CD14-positive monocyte (primary cell): ENCODE measurements at regions of chr15 and their contacts with region 1.

Region 1: GRCh38 chr15:68672781-68673205 is 94.0 kb downstream of the CORO2B start:
- DNase-seq: no peak
- H3K4me3 ChIP-seq: no peak overlapping the region
- H3K4me3 Mint-ChIP-seq: no peak overlapping the region
- H3K27ac ChIP-seq: no peak overlapping the region
- H3K27ac Mint-ChIP-seq: no peak overlapping the region
- H3K4me1 ChIP-seq: peaks cover 20 to 26% of the 10 kb centered on the region in 2 donors
- H3K4me1 Mint-ChIP-seq: peaks cover 29% of the 10 kb centered on the region
- H3K27me3 ChIP-seq: no peaks in the 10 kb centered on the region
- H3K27me3 Mint-ChIP-seq: peaks cover 2 to 5% (median 2%) of the 10 kb centered on the region in 3 donors
- CTCF ChIP-seq: no peak

Region 2: DNA sequence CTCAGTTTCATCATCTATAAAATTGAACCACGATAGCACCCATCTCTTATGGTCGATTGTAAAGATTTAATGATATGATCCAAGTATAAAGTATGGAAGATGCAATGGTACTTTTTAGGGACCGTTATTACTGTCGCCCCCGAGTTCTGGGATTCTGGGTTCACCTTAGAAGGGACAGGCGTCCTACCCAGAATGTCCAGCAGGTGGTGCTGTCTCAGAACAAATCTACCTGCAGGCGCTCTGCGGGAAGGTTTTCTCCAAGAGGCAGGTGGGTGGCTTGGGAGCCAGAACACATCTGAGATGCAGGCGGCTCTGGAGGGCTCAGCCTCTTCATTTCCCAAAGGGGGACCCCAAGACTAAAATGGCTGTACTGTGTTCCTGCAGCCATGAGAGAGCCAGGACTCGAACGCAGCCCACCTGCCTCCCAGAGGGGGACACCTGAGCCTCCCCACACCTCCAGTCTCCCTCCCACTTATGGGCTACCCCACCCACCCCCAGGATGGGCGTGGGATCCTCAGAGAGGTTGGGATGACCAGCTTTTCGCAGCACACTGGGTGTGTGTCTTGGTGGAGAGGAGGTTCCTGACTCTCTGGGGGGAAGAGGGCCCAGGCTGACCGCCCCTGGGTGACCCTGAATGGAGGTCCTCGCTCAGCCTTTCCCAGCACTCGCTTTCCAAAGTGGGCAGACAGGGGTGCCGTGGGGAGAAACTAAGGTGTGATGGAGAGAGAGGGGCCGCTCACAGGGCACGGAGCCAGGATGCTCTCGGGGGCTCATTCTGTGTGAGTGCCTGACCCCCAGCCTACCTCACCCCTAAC is 122.1 kb before region 1 on chr15:
- intact Hi-C with region 1: loop called in 1 of 2 experiments (anchors 5 kb)
- DNase-seq: peak; percentile 32 to 55 (median 53)
- H3K4me3 ChIP-seq: no peak overlapping the region
- H3K4me3 Mint-ChIP-seq: no peak overlapping the region
- H3K27ac ChIP-seq: no peak overlapping the region
- H3K27ac Mint-ChIP-seq: no peak overlapping the region
- H3K4me1 ChIP-seq: no peaks in the 10 kb centered on the region
- H3K4me1 Mint-ChIP-seq: no peaks in the 10 kb centered on the region
- H3K27me3 ChIP-seq: no peaks in the 10 kb centered on the region
- H3K27me3 Mint-ChIP-seq: peaks cover 10 to 13% (median 12%) of the 10 kb centered on the region in 3 donors
- CTCF ChIP-seq: peak; percentile 96

Region 3: GRCh38 chr15:68559345-68560310 is 113.2 kb before region 1 on chr15:
- intact Hi-C with region 1: loop called (anchors 2 to 5 kb)
- DNase-seq: peak; percentile 63 to 74 (median 65)
- H3K4me3 ChIP-seq: peak overlapping the region in 2 of 3 experiments; percentile 20 to 64
- H3K4me3 Mint-ChIP-seq: peak overlapping the region; percentile 77 to 96
- H3K27ac ChIP-seq: no peak overlapping the region
- H3K27ac Mint-ChIP-seq: peak overlapping the region in 1 of 7 donors; percentile 45
- H3K4me1 ChIP-seq: peaks cover 17 to 20% of the 10 kb centered on the region in 2 donors
- H3K4me1 Mint-ChIP-seq: peaks cover 20% of the 10 kb centered on the region
- H3K27me3 ChIP-seq: peaks cover 8 to 35% of the 10 kb centered on the region in 2 donors
- H3K27me3 Mint-ChIP-seq: peaks cover 32 to 41% (median 39%) of the 10 kb centered on the region in 3 donors
- CTCF ChIP-seq: peak; percentile 98

Region 4: GRCh38 chr15:68578174-68578979 is 94.4 kb before region 1 on chr15:
- intact Hi-C with region 1: no loop called
- DNase-seq: peak; percentile 46 to 62 (median 58)
- H3K4me3 ChIP-seq: peak overlapping the region; percentile 68 to 86 (median 78)
- H3K4me3 Mint-ChIP-seq: peak overlapping the region; percentile 91 to 97
- H3K27ac ChIP-seq: no peak overlapping the region
- H3K27ac Mint-ChIP-seq: peak overlapping the region in 2 of 7 donors; percentile 46 to 80
- H3K4me1 ChIP-seq: peaks cover 16 to 22% of the 10 kb centered on the region in 2 donors
- H3K4me1 Mint-ChIP-seq: peaks cover 19% of the 10 kb centered on the region
- H3K27me3 ChIP-seq: peaks cover 9 to 30% of the 10 kb centered on the region in 2 donors
- H3K27me3 Mint-ChIP-seq: peaks cover 36 to 68% (median 39%) of the 10 kb centered on the region in 3 donors
- CTCF ChIP-seq: peak; percentile 17

Region 5: GRCh38 chr15:68700455-68701123 is 27.8 kb after region 1 on chr15:
- intact Hi-C with region 1: no loop called
- DNase-seq: no peak
- H3K4me3 ChIP-seq: no peak overlapping the region
- H3K4me3 Mint-ChIP-seq: peak overlapping the region in 1 of 2 donors; percentile 28
- H3K27ac ChIP-seq: no peak overlapping the region
- H3K27ac Mint-ChIP-seq: no peak overlapping the region
- H3K4me1 ChIP-seq: peaks cover 4 to 7% of the 10 kb centered on the region in 2 donors
- H3K4me1 Mint-ChIP-seq: peaks cover 18% of the 10 kb centered on the region
- H3K27me3 ChIP-seq: no peaks in the 10 kb centered on the region
- H3K27me3 Mint-ChIP-seq: peaks cover 0 to 5% (median 4%) of the 10 kb centered on the region in 3 donors
- CTCF ChIP-seq: no peak

Region 6: GRCh38 chr15:68730471-68730919 is 57.7 kb after region 1 on chr15:
- intact Hi-C with region 1: no loop called
- DNase-seq: peak; percentile 38 to 55 (median 45)
- H3K4me3 ChIP-seq: no peak overlapping the region
- H3K4me3 Mint-ChIP-seq: no peak overlapping the region
- H3K27ac ChIP-seq: no peak overlapping the region
- H3K27ac Mint-ChIP-seq: no peak overlapping the region
- H3K4me1 ChIP-seq: peaks cover 8 to 12% of the 10 kb centered on the region in 2 donors
- H3K4me1 Mint-ChIP-seq: peaks cover 17% of the 10 kb centered on the region
- H3K27me3 ChIP-seq: no peaks in the 10 kb centered on the region
- H3K27me3 Mint-ChIP-seq: peaks cover 0 to 3% (median 1%) of the 10 kb centered on the region in 3 donors
- CTCF ChIP-seq: peak; percentile 70

Region 7: GRCh38 chr15:68791431-68792283 is 118.9 kb after region 1 on chr15:
- intact Hi-C with region 1: no loop called
- DNase-seq: peak; percentile 53 to 95 (median 68)
- H3K4me3 ChIP-seq: peak overlapping the region in 1 of 3 experiments; percentile 67
- H3K4me3 Mint-ChIP-seq: peak overlapping the region in 1 of 2 donors; percentile 65
- H3K27ac ChIP-seq: peak overlapping the region; percentile 75 to 92
- H3K27ac Mint-ChIP-seq: peak overlapping the region; percentile 89 to 99 (median 95)
- H3K4me1 ChIP-seq: peaks cover 85 to 87% of the 10 kb centered on the region in 2 donors
- H3K4me1 Mint-ChIP-seq: peaks cover 90% of the 10 kb centered on the region
- H3K27me3 ChIP-seq: no peaks in the 10 kb centered on the region
- H3K27me3 Mint-ChIP-seq: peaks cover 0 to 2% (median 0%) of the 10 kb centered on the region in 3 donors
- CTCF ChIP-seq: no peak